ENCODE measurements at regions of chr5 and their contacts with region 1.

Region 1: DNA sequence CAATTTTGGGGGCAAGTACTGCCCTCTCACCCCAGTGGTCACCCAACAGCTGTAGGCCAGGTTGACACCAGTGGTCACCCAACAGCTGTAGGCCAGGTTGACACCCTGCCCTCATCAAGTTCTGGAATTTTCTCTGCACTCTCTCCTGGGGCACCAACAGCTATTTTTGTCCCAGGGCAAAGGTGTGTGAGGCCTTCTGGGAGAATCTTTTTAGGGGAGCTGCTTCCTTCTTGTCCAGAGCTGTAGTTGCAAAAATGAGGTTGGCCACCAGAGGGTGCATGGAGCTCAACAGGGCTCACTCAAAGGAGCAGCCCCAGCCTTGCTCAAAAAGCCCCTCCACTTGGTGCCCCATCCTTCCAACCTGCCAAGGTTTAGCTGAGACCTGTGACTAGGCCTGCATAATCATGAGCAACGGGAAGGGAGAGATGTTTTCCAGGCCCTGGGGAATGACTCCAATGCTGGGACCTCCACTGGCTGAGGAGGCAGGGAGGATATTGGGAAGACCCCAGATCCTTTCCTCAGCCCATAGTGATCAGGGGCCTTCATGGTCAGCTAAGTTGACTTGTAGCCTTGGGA is 10.6 kb upstream of the P4HA2 start:
- DNase-seq: peak; percentile 69
- H3K4me3 ChIP-seq: no peak overlapping the region
- H3K27ac ChIP-seq: no peak overlapping the region
- H3K4me1 ChIP-seq: no peaks in the 10 kb centered on the region
- H3K27me3 ChIP-seq: no peaks in the 10 kb centered on the region
- CTCF ChIP-seq: peak; percentile 71 to 84
- POLR2A ChIP-seq: no peak

Region 2: DNA sequence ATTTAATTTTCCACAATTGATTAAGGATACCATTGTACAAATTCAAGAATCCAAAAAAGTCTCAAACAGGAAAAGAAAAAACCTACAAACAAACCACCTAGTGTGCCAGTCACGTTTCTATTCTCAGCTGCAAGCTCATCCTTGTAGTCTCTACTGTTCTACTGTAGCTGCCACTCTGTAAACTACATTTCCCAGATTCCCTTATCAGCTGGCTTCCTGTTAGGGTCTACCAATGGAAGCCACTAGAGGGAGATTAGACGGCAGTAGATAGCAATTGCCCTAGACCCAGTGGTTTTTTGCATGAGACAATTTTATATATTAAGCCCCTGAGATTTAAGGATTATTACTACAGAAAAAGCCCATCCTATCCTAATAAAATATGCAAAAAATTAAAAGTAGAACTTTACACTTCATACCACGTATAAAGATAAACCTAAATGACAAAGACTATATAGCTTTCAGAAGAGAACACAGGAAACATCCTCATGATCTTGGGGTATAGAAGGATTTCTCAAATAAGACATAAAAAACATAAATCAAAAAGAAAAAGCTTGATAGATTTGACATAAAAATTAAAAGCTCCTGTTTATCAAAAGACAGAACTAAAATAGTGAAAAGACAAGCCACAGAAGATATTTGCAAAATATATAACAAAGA is 48.0 kb before region 1 on chr5:
- CTCF ChIA-PET with region 1: interaction called, 13 read pairs
- POLR2A ChIA-PET with region 1: no interaction called
- dilution Hi-C with region 1: no loop called
- intact Hi-C with region 1: no loop called
- DNase-seq: peak; percentile 78
- H3K4me3 ChIP-seq: no peak overlapping the region
- H3K27ac ChIP-seq: no peak overlapping the region
- H3K4me1 ChIP-seq: no peaks in the 10 kb centered on the region
- H3K27me3 ChIP-seq: no peaks in the 10 kb centered on the region
- CTCF ChIP-seq: peak; percentile 75 to 76
- POLR2A ChIP-seq: no peak

Region 3: DNA sequence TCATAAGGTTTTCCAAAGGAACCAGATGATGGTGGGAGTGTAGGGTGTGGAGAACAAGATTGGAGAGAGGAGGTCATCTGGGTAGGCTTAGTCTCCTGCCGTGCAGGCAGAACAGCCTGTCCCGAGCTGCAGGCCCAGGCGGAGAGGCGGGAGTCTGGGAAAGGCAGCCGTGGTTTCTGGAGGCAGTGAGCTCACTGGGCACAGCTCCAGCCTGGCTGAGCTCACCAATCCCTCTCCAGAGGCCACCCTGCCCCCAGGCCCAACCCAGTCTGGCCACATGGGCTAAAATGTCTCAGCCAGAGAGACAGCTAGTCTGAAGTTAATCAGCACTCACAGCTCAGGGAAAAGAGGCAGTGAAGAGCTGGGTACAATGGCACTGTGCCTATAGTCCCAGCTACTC is 22.9 kb before region 1 on chr5:
- CTCF ChIA-PET with region 1: interaction called, 12 read pairs
- POLR2A ChIA-PET with region 1: no interaction called
- dilution Hi-C with region 1: no loop called
- intact Hi-C with region 1: no loop called
- DNase-seq: peak; percentile 80
- H3K4me3 ChIP-seq: no peak overlapping the region
- H3K27ac ChIP-seq: peak overlapping the region; percentile 52
- H3K4me1 ChIP-seq: peaks cover 5% of the 10 kb centered on the region
- H3K27me3 ChIP-seq: no peaks in the 10 kb centered on the region
- CTCF ChIP-seq: no peak
- POLR2A ChIP-seq: no peak

Region 4: GRCh38 chr5:132251220-132251725 is 13.0 kb after region 1 on chr5:
- CTCF ChIA-PET with region 1: interaction called, 63 read pairs
- POLR2A ChIA-PET with region 1: no interaction called
- dilution Hi-C with region 1: no loop called
- intact Hi-C with region 1: no loop called
- DNase-seq: no peak
- H3K4me3 ChIP-seq: no peak overlapping the region
- H3K27ac ChIP-seq: no peak overlapping the region
- H3K4me1 ChIP-seq: no peaks in the 10 kb centered on the region
- H3K27me3 ChIP-seq: no peaks in the 10 kb centered on the region
- CTCF ChIP-seq: no peak
- POLR2A ChIP-seq: no peak

Region 5: GRCh38 chr5:132272311-132273210 is 34.3 kb after region 1 on chr5:
- CTCF ChIA-PET with region 1: interaction called, 35 read pairs
- POLR2A ChIA-PET with region 1: no interaction called
- dilution Hi-C with region 1: no loop called
- intact Hi-C with region 1: loop called (anchors 5 kb)
- DNase-seq: peak; percentile 70
- H3K4me3 ChIP-seq: no peak overlapping the region
- H3K27ac ChIP-seq: no peak overlapping the region
- H3K4me1 ChIP-seq: no peaks in the 10 kb centered on the region
- H3K27me3 ChIP-seq: no peaks in the 10 kb centered on the region
- CTCF ChIP-seq: peak; percentile 79 to 81
- POLR2A ChIP-seq: peak; percentile 36

Region 6: DNA sequence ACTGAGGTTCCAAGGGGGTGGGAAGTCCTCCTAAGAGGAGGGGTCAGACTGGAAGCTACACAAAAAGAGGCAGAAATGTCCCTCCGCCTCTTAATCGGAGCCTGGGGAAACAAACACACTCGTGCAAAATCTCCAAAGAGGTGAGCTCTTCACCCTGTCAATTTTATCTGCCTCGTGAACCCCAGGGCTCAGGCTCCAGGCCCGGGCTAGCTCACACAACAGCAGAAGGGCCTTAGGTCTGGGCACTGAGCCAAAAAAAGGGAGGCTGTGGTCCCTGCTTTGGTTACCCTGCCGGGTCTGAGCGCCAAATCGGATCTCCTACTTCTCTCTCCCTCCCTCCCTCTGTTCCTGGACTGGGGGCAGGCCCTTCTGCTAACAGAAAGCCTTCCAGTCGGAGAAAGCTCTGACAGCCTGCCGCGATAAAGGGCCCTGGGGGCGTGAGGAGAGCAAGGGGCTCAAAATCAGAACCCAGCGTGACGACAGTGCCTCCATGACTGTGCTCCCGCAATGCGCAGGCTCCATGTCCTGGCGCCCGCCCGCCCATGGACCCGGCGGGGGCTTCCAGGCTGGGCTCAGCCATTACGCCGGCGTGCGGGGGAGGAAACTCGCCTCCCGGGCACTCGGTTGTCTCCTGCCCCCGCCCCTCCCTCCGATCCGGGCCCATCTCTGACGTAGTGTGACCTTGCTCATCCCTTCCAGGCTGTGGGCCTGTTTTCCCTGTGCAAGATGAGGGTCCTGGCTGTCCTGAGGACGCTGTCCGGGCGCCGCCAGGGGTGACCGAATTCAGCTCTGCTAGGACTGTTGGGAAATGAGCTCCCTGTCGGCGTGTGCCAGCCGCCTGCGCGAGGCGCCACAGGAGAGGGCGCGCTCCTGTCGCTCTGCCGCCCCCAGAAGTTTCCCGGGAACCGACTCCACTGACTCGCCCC is 55.1 kb after region 1 on chr5:
- CTCF ChIA-PET with region 1: interaction called, 36 read pairs
- POLR2A ChIA-PET with region 1: interaction called, 3 read pairs
- dilution Hi-C with region 1: no loop called
- intact Hi-C with region 1: loop called (anchors 1 kb)
- DNase-seq: peak; percentile 89
- H3K4me3 ChIP-seq: peak overlapping the region; percentile 37 to 70 (median 53)
- H3K27ac ChIP-seq: peak overlapping the region; percentile 93
- H3K4me1 ChIP-seq: peaks cover 25% of the 10 kb centered on the region
- H3K27me3 ChIP-seq: no peaks in the 10 kb centered on the region
- CTCF ChIP-seq: peak in 1 of 2 donors; percentile 40
- POLR2A ChIP-seq: no peak

Region 7: DNA sequence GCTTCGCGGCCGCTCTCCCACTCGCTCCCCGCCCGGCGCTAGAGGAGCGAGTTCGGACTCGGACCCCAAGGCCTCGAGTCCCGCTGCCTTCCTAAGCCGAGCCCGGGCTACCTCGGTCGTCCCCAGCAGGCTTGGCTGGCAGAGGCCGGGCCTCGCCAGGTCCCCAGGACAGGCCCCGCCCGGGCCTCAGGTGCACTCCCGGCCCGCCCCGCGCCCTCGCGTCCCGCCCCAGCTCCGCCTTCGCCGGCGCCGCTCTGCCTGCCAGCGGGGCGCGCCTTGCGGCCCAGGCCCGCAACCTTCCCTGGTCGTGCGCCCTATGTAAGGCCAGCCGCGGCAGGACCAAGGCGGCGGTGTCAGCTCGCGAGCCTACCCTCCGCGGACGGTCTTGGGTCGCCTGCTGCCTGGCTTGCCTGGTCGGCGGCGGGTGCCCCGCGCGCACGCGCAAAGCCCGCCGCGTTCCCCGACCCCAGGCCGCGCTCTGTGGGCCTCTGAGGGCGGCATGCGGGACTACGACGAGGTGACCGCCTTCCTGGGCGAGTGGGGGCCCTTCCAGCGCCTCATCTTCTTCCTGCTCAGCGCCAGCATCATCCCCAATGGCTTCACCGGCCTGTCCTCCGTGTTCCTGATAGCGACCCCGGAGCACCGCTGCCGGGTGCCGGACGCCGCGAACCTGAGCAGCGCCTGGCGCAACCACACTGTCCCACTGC is 131.4 kb after region 1 on chr5 and contains the start of gene SLC22A5:
- CTCF ChIA-PET with region 1: interaction called, 32 read pairs
- POLR2A ChIA-PET with region 1: no interaction called
- dilution Hi-C with region 1: no loop called
- intact Hi-C with region 1: no loop called
- DNase-seq: peak; percentile 70
- H3K4me3 ChIP-seq: peak within 1 kb of the TSS; percentile 59 to 61 (median 61)
- H3K27ac ChIP-seq: peak within 1 kb of the TSS; percentile 2
- H3K4me1 ChIP-seq: peaks cover 5% of the 10 kb centered on the region
- H3K27me3 ChIP-seq: no peaks in the 10 kb centered on the region
- CTCF ChIP-seq: no peak
- POLR2A ChIP-seq: peak; percentile 28
- total RNA-seq, gene SLC22A5: 3.6 and 3.8 TPM in 2 replicates